ENCODE measurements at regions of chr1 and their contacts with region 1.

Region 1: DNA sequence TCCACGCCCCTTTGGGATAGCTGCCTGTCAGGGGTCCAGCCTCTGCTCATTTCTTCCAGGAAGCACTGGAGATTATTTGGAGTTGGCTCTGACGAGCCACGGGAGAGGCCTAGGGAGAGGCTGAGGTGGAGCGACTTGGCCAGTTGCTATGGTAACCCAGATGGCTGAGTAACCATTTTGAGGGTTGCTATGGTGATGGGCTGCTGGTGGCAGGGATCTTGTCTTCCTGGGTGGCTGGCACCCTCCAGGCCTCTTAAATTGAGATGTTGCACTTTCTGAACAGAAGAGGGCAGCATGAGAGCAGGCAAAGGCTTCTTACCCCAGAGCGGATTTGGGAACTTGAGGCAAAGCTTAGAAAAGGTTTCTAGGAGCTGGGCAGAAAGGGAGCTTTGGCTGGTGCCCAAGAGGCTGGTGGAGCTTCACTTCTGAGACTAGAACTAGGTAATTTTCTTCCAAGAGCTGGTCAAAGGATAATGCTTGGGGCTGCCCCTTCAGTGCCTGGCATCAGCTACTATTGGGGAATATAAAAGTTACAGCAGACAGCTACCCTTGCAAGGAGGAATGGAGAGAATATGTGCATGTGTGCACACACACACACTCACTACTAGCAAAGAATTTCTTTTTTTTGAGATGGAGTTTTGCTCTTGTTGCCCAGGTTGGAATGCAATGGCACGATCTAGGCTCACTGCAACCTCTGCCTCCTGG is 72.5 kb downstream of the NDUFS5 start:
- DNase-seq: peak in 1 of 2 donors; percentile 52
- ATAC-seq: peak; percentile 64 to 76
- H3K4me3 ChIP-seq: no peak overlapping the region
- H3K27ac ChIP-seq: no peak overlapping the region
- H3K4me1 ChIP-seq: peaks cover 0 to 11% of the 10 kb centered on the region in 2 donors
- H3K27me3 ChIP-seq: no peaks in the 10 kb centered on the region
- CTCF ChIP-seq: peak; percentile 68 to 76 (median 70)
- POLR2A ChIP-seq: no peak

Region 2: GRCh38 chr1:37553927-37554808 is 1544.5 kb before region 1 on chr1 and contains the start of gene SNIP1:
- in situ Hi-C with region 1: no loop called
- intact Hi-C with region 1: no loop called
- DNase-seq: peak; percentile 91 to 92
- ATAC-seq: peak; percentile 98
- H3K4me3 ChIP-seq: peak within 1 kb of the TSS; percentile 71 to 100 (median 92)
- H3K27ac ChIP-seq: peak within 1 kb of the TSS; percentile 83 to 94 (median 88)
- H3K4me1 ChIP-seq: peaks cover 17 to 21% of the 10 kb centered on the region in 2 donors
- H3K27me3 ChIP-seq: no peaks in the 10 kb centered on the region
- CTCF ChIP-seq: no peak
- POLR2A ChIP-seq: peak; percentile 65 to 81
- total RNA-seq, gene SNIP1: 5.2 to 9.2 (median 6.5) TPM

Region 3: GRCh38 chr1:38973659-38974424 is 124.9 kb before region 1 on chr1:
- in situ Hi-C with region 1: no loop called
- intact Hi-C with region 1: no loop called
- DNase-seq: peak; percentile 5 to 20
- ATAC-seq: peak; percentile 54 to 60
- H3K4me3 ChIP-seq: no peak overlapping the region
- H3K27ac ChIP-seq: no peak overlapping the region
- H3K4me1 ChIP-seq: peaks cover 0 to 5% of the 10 kb centered on the region in 2 donors
- H3K27me3 ChIP-seq: no peaks in the 10 kb centered on the region
- CTCF ChIP-seq: no peak
- POLR2A ChIP-seq: no peak

Region 4: GRCh38 chr1:39183503-39184353 is 85.0 kb after region 1 on chr1:
- in situ Hi-C with region 1: loop called in 2 of 4 experiments (anchors 5 to 10 kb)
- intact Hi-C with region 1: no loop called
- DNase-seq: peak; percentile 65 to 82
- ATAC-seq: peak; percentile 95 to 96
- H3K4me3 ChIP-seq: no peak overlapping the region
- H3K27ac ChIP-seq: peak overlapping the region; percentile 80 to 91 (median 83)
- H3K4me1 ChIP-seq: peaks cover 33 to 35% of the 10 kb centered on the region in 2 donors
- H3K27me3 ChIP-seq: no peaks in the 10 kb centered on the region
- CTCF ChIP-seq: peak; percentile 36 to 63 (median 58)
- POLR2A ChIP-seq: peak in 1 of 2 donors; percentile 40

Region 5: DNA sequence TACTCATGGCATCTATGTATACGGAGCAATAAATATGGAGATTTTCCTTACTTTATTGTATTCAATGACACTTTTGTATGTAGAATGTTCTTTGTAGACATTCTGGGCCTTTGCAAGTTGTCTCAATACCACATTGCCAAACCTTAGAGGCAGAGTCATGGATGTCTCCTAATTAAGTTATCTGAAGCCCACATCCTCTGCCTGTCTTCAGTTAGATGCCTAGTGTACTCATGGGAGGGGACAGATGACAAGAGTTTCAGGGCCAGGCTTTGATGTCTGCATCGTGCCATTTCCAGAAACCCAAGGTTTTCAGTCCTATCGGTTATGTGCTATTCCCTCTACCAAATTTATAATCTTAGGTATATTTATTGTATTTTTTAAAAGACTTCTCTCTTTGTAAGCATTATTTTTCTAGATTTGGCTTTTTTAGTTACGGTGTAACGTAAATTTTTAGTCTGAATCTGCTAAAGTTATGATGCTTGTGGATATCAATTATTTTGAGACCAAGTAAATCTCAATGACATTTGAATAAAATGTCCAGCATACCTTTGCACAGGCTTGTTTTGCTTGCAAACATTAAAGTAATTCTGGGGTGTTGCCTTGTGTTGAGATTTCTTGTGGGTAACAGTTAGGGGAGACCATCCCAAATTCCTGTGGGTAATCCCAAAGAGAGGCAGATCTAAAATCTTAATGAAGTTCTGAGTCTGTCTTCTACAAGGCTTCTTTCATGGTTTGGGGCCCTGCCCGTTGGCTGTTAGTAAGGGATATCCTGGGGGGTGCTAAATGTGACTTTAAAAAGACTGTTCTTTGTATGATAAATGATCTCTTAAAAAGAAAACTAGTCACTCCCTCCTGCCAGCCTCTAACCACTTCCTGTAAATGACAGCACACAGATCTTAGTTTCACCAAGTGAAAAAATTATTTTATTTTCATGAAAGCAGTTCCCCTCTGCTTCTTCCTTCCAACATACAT is 97.8 kb after region 1 on chr1:
- in situ Hi-C with region 1: loop called in 2 of 4 experiments (anchors 5 kb)
- intact Hi-C with region 1: loop called (anchors 1 kb)
- DNase-seq: no peak
- ATAC-seq: no peak
- H3K4me3 ChIP-seq: no peak overlapping the region
- H3K27ac ChIP-seq: no peak overlapping the region
- H3K4me1 ChIP-seq: peaks cover 24 to 35% of the 10 kb centered on the region in 2 donors
- H3K27me3 ChIP-seq: no peaks in the 10 kb centered on the region
- CTCF ChIP-seq: no peak
- POLR2A ChIP-seq: no peak

Region 6: GRCh38 chr1:39408641-39409054 is 309.9 kb after region 1 on chr1:
- in situ Hi-C with region 1: no loop called
- intact Hi-C with region 1: loop called (anchors 2 kb)
- DNase-seq: peak; percentile 94 to 96
- ATAC-seq: peak; percentile 88
- H3K4me3 ChIP-seq: peak overlapping the region; percentile 66 to 98 (median 80)
- H3K27ac ChIP-seq: peak overlapping the region; percentile 91 to 98 (median 94)
- H3K4me1 ChIP-seq: peaks cover 60 to 62% of the 10 kb centered on the region in 2 donors
- H3K27me3 ChIP-seq: no peaks in the 10 kb centered on the region
- CTCF ChIP-seq: no peak
- POLR2A ChIP-seq: peak in 1 of 2 donors; percentile 5